GM10248 (cell line): ENCODE measurements at regions of chr2 and their contacts with region 1.

Region 1: DNA sequence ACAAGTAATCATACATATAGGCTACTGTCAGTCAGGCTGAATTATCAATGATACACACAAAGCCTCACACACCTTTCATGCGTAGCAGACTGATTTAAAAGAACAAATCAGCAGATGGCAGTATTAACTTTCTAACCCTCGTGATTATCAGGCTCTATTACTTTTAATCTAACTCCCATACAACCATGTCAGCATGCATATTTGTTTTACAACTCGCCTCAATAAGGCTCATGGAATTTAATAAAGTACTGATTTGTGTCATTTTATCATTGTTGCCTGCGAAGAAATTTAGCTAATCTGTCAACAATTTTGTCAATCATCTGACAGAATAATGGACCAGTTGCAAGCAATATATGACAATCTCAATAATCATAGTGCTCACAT is 82.8 kb downstream of the SLC25A12 start:
- DNase-seq: no peak
- CTCF ChIP-seq: peak; percentile 41

Region 2: GRCh38 chr2:171778515-171778914 is 32.7 kb before region 1 on chr2:
- CTCF ChIA-PET with region 1: no interaction called
- POLR2A ChIA-PET with region 1: no interaction called
- DNase-seq: no peak
- CTCF ChIP-seq: no peak

Region 3: DNA sequence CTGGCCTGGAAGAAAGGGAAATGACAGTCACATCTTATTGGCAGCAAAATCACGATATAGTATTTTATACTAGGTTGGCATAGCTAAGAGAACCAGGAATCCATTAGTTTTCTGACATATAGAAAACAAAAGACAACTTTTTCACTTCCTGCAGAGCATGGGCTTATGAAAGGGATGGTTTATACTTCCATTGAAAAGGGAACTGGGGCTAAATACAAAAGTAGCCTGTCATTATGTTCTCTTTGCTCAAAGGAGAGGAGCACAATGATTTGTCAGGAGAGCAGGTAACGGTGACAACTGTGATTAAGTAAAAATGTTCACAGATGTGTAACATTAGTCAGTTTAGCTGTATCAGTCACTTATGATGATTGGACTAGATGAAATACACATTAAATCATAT is 36.4 kb after region 1 on chr2:
- CTCF ChIA-PET with region 1: no interaction called
- POLR2A ChIA-PET with region 1: no interaction called
- DNase-seq: no peak
- CTCF ChIP-seq: no peak

Region 4: DNA sequence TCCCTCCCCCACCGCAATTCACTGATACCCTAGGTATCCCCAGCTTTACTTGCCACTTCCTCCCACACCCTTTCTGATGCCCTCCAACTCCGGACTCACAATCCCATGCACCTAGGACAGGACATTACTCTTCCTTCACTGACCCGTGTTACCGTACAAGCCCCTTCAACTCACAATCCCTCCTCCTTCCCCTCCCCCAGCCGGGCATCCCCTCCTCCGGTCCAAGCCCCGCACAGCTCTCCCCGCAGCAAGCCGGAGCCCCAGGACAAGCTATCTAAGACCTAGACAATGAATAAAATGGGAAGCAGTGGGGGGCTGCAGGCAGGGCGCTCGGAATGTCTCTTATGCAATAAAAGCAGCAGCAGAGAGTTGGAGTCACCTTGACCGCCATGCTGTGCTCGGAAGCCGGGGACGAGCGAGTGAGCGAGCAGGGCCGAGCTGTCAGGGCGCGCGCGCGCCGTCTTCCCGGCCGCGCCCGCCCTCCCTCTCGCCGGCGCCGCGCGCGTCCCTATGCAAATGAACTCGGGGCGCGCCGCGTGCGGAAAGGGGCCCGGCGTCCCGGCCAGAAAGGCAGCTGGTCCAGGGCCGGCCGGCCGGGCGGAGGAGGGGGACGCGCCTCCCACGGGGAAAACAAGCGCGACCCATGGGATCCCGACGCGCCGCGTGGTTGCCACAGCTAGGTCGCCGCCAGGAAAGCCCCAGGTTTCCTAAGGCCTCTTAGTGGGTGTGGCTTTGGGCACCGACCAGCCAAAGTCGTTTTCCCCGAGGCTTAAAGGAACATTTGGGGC is 82.8 kb after region 1 on chr2 and contains the start of gene SLC25A12:
- CTCF ChIA-PET with region 1: no interaction called
- POLR2A ChIA-PET with region 1: no interaction called
- DNase-seq: peak; percentile 94
- CTCF ChIP-seq: no peak

Region 5: DNA sequence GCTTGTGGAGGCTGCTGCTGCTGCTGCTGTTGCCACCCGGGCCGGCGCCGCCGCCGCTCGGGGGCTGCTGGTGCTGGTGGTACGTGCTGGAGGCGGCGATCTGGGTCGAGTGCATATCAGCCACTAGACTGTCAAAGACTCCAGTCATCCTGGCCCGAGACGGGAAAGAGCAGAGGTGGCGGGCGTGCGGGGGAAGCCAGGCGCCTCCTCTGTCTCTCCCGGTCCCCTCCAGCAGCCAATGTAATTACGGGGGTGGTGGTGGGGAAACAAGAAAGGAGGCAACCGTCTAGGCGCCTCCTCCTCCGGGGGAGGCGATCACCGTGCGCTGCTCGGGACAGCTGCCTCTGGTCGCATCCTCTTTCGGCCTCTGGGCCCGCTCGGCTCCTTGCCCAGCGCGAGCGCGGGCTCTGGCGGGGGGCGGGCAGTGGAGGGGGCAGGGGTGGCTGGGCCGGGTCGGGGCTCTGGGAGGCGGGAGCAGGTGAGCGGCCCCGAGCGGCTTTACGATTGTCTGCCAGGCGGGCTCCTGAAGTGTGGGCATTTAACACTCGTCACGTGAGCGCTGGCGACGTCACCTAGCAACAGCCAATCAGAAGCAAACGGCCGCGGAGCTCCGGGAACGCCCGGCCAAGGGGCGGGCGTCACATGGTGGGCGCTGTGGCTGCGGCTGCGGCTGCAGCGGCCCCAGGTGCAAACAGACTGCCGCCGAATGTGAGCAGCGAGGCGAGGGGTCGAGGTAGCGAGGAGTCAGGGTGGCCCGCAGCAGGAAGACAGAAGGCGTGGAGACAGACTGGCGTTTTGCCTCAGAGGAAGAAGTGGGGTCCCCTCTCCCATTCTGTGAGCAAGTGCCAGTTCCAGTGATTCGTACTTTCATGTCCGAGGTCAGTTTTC is 291.4 kb after region 1 on chr2 and contains the start of gene DLX2:
- CTCF ChIA-PET with region 1: interaction called, 12 read pairs
- POLR2A ChIA-PET with region 1: no interaction called
- DNase-seq: peak; percentile 88
- CTCF ChIP-seq: no peak